ENCODE measurements at regions of chr12 and their contacts with region 1.

Region 1: DNA sequence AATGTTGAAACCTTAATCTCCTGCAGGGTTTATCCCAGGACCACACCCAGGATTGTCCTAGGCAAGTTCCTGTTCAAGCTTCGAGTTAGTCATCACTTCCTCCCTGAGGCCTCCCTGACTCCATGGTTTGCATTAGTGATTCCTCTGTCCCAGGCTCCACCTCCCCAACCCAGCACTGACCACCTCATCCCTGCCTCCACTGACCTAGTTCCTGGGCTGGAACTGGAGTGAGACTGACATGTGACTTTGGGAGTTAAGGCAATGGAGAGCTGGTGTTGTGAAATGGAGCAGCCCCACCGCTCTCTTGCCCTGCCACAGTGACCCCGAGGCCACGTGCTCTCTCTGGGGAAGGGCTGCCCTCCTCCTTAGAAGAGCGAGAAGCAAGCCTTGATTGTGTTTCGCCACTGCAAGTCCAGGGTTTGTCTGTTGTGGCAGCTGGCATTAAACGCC is 15.8 kb upstream of the DTX1 start:
- DNase-seq: peak; percentile 72
- H3K4me3 ChIP-seq: no peak overlapping the region
- H3K27ac ChIP-seq: peak overlapping the region; percentile 63
- H3K4me1 ChIP-seq: peaks cover 12% of the 10 kb centered on the region
- H3K27me3 ChIP-seq: peaks cover 0 to 4% of the 10 kb centered on the region in 2 experiments
- CTCF ChIP-seq: no peak
- POLR2A ChIP-seq: peak; percentile 24

Region 2: GRCh38 chr12:112837629-112838197 is 203.0 kb before region 1 on chr12:
- CTCF ChIA-PET with region 1: no interaction called
- POLR2A ChIA-PET with region 1: no interaction called
- dilution Hi-C with region 1: no loop called
- intact Hi-C with region 1: loop called (anchors 2 kb)
- DNase-seq: peak; percentile 42
- H3K4me3 ChIP-seq: no peak overlapping the region
- H3K27ac ChIP-seq: peak overlapping the region; percentile 94
- H3K4me1 ChIP-seq: peaks cover 43% of the 10 kb centered on the region
- H3K27me3 ChIP-seq: no peaks in the 10 kb centered on the region
- CTCF ChIP-seq: no peak
- POLR2A ChIP-seq: no peak

Measured in endothelial cell of umbilical vein (primary cell).